B cell (primary cell): ENCODE measurements at regions of chr10 and their contacts with region 1.

Region 1: GRCh38 chr10:96831867-96832720 is at the start of gene LCOR:
- DNase-seq: peak; percentile 96
- ATAC-seq: peak; percentile 69
- H3K4me3 ChIP-seq: peak within 1 kb of the TSS; percentile 64 to 86 (median 75)
- H3K4me3 Mint-ChIP-seq: peak within 1 kb of the TSS; percentile 91
- H3K27ac ChIP-seq: peak within 1 kb of the TSS; percentile 82 to 89
- H3K27ac Mint-ChIP-seq: peak within 1 kb of the TSS; percentile 95
- H3K4me1 ChIP-seq: peaks cover 32 to 41% of the 10 kb centered on the region in 2 donors
- H3K4me1 Mint-ChIP-seq: peaks cover 53% of the 10 kb centered on the region
- H3K27me3 ChIP-seq: no peaks in the 10 kb centered on the region
- H3K27me3 Mint-ChIP-seq: no peaks in the 10 kb centered on the region
- CTCF ChIP-seq: no peak
- total RNA-seq, gene LCOR: 70.0 and 79.8 TPM in 2 replicates

Region 2: GRCh38 chr10:96513698-96514561 is 318.2 kb before region 1 on chr10 and contains the start of gene TLL2:
- CTCF ChIA-PET with region 1: no interaction called
- POLR2A ChIA-PET with region 1: no interaction called
- intact Hi-C with region 1: loop called (anchors 5 kb)
- DNase-seq: peak; percentile 80
- ATAC-seq: peak; percentile 85
- H3K4me3 ChIP-seq: peak within 1 kb of the TSS; percentile 11 to 86 (median 62)
- H3K4me3 Mint-ChIP-seq: peak within 1 kb of the TSS; percentile 89
- H3K27ac ChIP-seq: no peak within 1 kb of the TSS
- H3K27ac Mint-ChIP-seq: peak within 1 kb of the TSS; percentile 46
- H3K4me1 ChIP-seq: peaks cover 16 to 19% of the 10 kb centered on the region in 2 donors
- H3K4me1 Mint-ChIP-seq: peaks cover 23% of the 10 kb centered on the region
- H3K27me3 ChIP-seq: peaks cover 2 to 35% (median 9%) of the 10 kb centered on the region in 4 experiments
- H3K27me3 Mint-ChIP-seq: peaks cover 6% of the 10 kb centered on the region
- CTCF ChIP-seq: no peak
- total RNA-seq, gene TLL2: 0.47 and 0.51 TPM in 2 replicates

Region 3: DNA sequence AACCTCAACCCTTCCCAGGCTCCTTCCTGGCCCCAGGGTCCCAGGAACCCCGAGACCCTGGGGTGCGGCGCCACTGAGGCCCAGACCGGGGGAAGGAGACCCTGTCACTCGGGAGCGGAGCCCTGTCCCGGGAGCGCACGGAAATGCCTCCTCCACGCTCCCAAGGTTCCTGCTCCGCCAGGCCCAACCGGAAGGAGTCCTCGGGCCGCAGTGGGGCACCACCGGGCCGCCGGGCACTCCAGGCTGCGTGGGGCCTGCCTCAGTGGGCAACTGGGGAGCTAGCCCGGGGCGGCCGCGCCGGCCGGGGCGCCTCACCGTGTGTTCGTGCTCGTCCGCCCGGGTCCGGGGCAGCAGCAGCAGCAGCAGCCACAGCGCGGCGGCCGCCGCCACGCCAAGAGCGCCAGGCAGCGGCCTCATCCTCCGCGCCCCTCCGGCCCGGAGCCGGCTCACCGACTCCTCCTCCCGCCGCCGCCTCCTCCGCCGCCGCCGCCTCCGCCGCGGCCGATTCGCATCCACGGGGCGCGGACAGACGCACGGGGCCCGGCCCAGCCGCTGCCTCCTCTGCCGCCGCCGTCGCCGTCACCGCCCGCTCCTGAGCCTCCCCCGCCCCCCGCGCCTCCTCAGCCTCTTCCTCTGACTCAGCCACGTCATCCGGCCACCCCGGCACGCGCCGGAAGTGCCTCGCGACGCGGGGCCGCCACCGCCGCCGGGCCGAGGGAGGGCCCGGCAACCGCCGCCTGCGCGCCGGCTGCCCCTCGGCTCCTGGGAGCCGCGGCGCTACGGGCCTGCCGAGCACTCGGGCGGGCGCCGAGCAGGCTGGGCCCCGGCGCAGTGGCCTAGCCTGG is 245.5 kb before region 1 on chr10 and contains the start of gene TM9SF3:
- CTCF ChIA-PET with region 1: no interaction called
- POLR2A ChIA-PET with region 1: no interaction called
- intact Hi-C with region 1: loop called (anchors 1 kb)
- DNase-seq: peak; percentile 96
- ATAC-seq: peak; percentile 87
- H3K4me3 ChIP-seq: peak within 1 kb of the TSS; percentile 69 to 97 (median 84)
- H3K4me3 Mint-ChIP-seq: peak within 1 kb of the TSS; percentile 91
- H3K27ac ChIP-seq: peak within 1 kb of the TSS; percentile 96 to 98
- H3K27ac Mint-ChIP-seq: peak within 1 kb of the TSS; percentile 99
- H3K4me1 ChIP-seq: peaks cover 24 to 40% of the 10 kb centered on the region in 2 donors
- H3K4me1 Mint-ChIP-seq: peaks cover 41% of the 10 kb centered on the region
- H3K27me3 ChIP-seq: no peaks in the 10 kb centered on the region
- H3K27me3 Mint-ChIP-seq: no peaks in the 10 kb centered on the region
- CTCF ChIP-seq: no peak
- total RNA-seq, gene TM9SF3: 62.8 and 63.4 TPM in 2 replicates

Region 4: DNA sequence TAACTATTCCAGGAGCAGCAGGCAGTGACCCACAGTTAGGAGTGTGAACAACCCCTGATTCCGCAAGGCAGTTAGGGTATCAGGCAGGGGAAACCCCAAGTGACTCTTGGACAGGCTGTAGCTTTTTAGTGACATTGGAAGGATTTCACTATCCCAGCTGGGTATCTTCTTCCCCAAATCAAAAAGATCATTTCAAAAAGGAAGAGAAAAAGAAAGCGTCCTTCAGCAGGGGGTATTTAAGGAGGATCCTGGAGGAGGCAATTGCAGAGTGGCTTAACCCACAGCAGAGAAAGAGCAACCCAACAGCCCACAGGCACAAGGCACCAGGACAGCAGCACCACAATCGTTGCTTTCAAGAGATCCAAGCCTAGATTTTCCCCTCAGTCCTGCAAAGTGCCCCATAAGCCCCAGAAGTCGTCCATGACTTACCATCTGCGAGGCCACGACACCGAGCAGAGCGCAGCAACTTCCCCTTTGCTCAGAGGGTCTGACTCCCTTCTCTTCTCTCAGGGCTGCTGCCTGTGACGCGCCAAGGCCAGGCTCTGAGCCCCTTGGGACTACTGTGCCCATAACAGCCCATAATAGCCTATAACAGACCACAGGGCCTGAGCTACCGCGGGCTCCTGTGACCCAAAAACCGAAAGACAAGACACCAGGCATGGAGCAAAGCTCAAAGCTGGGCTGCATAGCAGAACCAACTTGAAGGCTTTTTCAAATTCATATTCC is 131.6 kb before region 1 on chr10:
- CTCF ChIA-PET with region 1: no interaction called
- POLR2A ChIA-PET with region 1: no interaction called
- intact Hi-C with region 1: loop called (anchors 5 kb)
- DNase-seq: peak; percentile 95
- ATAC-seq: peak; percentile 94
- H3K4me3 ChIP-seq: peak overlapping the region; percentile 75 to 97 (median 82)
- H3K4me3 Mint-ChIP-seq: peak overlapping the region; percentile 98
- H3K27ac ChIP-seq: peak overlapping the region; percentile 88 to 92
- H3K27ac Mint-ChIP-seq: peak overlapping the region; percentile 96
- H3K4me1 ChIP-seq: peaks cover 76 to 81% of the 10 kb centered on the region in 2 donors
- H3K4me1 Mint-ChIP-seq: peaks cover 77% of the 10 kb centered on the region
- H3K27me3 ChIP-seq: no peaks in the 10 kb centered on the region
- H3K27me3 Mint-ChIP-seq: no peaks in the 10 kb centered on the region
- CTCF ChIP-seq: no peak

Region 5: DNA sequence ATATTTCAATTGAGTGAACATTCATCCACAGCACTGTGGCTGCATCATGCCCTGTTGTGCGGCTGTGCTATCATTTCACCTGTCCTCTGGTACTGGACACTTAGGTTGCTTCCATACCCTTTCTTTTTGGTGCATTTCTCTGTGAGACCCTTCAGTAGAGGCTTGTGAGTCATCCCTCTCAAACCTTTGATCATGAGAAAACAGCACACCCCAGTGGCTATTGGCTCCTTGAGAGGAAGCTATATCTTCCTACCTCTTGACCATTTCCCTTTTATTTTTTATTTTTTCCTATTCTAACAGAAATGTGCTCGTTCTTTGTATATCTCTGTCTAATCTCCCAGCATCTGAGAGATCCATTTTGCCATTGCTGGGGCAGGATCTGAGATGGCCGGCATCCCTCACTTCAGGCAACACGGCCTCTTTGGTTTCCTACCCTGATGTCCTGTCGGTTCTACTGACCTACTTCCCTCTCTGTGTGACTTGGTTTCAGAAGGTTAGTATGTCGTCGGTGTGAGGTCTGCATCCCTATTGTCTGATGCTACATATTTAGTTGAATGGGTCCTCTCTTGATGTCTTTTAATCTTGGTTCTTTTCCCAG is 88.0 kb before region 1 on chr10:
- CTCF ChIA-PET with region 1: no interaction called
- POLR2A ChIA-PET with region 1: interaction called, 5 read pairs
- intact Hi-C with region 1: loop called (anchors 5 kb)
- DNase-seq: peak; percentile 51
- ATAC-seq: no peak
- H3K4me3 ChIP-seq: peak overlapping the region in 1 of 5 experiments; percentile 3
- H3K4me3 Mint-ChIP-seq: peak overlapping the region; percentile 30
- H3K27ac ChIP-seq: peak overlapping the region; percentile 46 to 74
- H3K27ac Mint-ChIP-seq: peak overlapping the region; percentile 83
- H3K4me1 ChIP-seq: peaks cover 81 to 83% of the 10 kb centered on the region in 2 donors
- H3K4me1 Mint-ChIP-seq: peaks cover 52% of the 10 kb centered on the region
- H3K27me3 ChIP-seq: no peaks in the 10 kb centered on the region
- H3K27me3 Mint-ChIP-seq: no peaks in the 10 kb centered on the region
- CTCF ChIP-seq: no peak

Region 6: DNA sequence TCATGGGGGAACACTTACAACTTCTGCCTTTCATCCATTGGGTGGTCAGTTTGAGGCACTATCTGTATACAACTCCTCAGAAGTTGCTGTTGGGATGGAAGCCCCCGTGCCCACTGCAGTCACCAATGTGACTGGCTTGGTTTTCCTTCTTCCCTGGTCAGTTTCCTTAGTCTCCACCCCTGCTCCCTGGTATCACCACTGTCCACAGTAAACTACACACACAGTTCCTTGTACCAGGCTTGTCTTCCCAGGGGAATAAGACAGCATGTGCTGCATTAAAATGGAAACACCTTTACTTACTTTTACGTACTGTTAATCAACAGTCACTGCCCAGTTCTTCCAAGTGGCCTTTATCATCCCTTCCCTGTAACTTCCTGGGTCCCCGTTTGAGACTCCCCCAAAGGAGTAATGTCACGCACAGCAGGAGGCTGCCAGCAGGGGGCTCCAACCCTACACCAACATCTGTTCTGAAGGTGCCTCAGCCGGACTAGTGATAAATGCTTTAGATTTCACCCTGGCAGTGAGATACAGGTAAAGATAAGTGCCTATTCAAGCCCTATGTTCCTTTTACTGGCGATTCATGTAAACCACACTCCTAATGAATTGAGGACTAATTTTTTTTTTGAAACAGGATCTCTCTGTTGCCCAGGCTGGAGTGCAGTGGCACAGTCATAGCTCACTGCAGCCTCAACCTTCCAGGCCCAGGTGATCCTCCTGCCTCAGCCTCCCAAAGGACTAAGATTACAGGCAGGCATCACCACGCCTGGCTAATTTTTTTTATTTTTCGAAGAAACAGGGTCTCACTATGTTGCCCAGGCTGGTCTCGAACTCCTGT is 66.5 kb before region 1 on chr10:
- CTCF ChIA-PET with region 1: interaction called, 13 read pairs
- POLR2A ChIA-PET with region 1: interaction called, 4 read pairs
- intact Hi-C with region 1: loop called (anchors 1 kb)
- DNase-seq: peak; percentile 83
- ATAC-seq: peak; percentile 74
- H3K4me3 ChIP-seq: no peak overlapping the region
- H3K4me3 Mint-ChIP-seq: peak overlapping the region; percentile 60
- H3K27ac ChIP-seq: peak overlapping the region; percentile 30 to 54
- H3K27ac Mint-ChIP-seq: peak overlapping the region; percentile 77
- H3K4me1 ChIP-seq: peaks cover 33% of the 10 kb centered on the region in 2 donors
- H3K4me1 Mint-ChIP-seq: peaks cover 39% of the 10 kb centered on the region
- H3K27me3 ChIP-seq: no peaks in the 10 kb centered on the region
- H3K27me3 Mint-ChIP-seq: no peaks in the 10 kb centered on the region
- CTCF ChIP-seq: peak; percentile 90

Region 7: GRCh38 chr10:96789571-96790108 is 42.5 kb before region 1 on chr10:
- CTCF ChIA-PET with region 1: interaction called, 5 read pairs
- POLR2A ChIA-PET with region 1: interaction called, 3 read pairs
- intact Hi-C with region 1: loop called (anchors 2 kb)
- DNase-seq: peak; percentile 88
- ATAC-seq: peak; percentile 94
- H3K4me3 ChIP-seq: no peak overlapping the region
- H3K4me3 Mint-ChIP-seq: peak overlapping the region; percentile 62
- H3K27ac ChIP-seq: peak overlapping the region; percentile 64 to 87
- H3K27ac Mint-ChIP-seq: peak overlapping the region; percentile 75
- H3K4me1 ChIP-seq: peaks cover 16 to 20% of the 10 kb centered on the region in 2 donors
- H3K4me1 Mint-ChIP-seq: peaks cover 18% of the 10 kb centered on the region
- H3K27me3 ChIP-seq: no peaks in the 10 kb centered on the region
- H3K27me3 Mint-ChIP-seq: no peaks in the 10 kb centered on the region
- CTCF ChIP-seq: no peak